Endothelial cell of umbilical vein (primary cell): ENCODE measurements at regions of chr14 and their contacts with region 1.

Region 1: GRCh38 chr14:22536853-22537338 is 52.1 kb downstream of the DAD1 start:
- DNase-seq: peak; percentile 98
- H3K4me3 ChIP-seq: no peak overlapping the region
- H3K27ac ChIP-seq: peak overlapping the region; percentile 57
- H3K4me1 ChIP-seq: peaks cover 38% of the 10 kb centered on the region
- H3K27me3 ChIP-seq: no peaks in the 10 kb centered on the region
- CTCF ChIP-seq: no peak
- POLR2A ChIP-seq: no peak

Region 2: DNA sequence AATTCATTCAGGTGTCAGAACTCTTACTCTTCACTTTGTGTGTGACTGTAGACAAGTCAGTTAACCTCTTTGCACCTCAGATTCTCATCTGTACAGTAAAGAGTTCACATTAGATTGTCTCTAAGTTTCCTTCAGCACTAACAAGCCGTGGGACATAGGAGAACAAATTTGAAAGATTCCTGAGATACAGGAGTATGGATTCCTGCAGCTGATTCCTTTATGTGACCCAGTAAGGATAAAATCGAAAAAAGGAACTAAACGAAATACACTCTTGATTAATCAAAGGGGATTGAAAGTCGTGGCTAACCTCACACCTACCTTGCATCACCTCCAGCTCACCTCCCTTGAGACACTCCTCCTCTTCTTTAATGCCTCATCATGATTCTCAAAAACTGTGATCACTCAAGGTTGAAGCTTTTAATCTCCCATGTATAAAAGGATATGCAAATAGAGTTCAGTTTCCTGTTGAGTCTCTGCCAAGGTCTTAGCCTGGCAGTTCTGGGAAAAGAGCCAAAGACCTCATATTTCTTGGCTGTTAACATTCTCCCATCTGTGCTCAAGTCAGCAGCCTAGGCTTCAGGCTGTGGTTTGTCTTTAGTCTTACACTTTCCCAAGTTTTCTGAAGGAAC is 104.4 kb before region 1 on chr14:
- CTCF ChIA-PET with region 1: no interaction called
- POLR2A ChIA-PET with region 1: no interaction called
- dilution Hi-C with region 1: no loop called
- intact Hi-C with region 1: loop called (anchors 5 kb)
- DNase-seq: peak; percentile 97
- H3K4me3 ChIP-seq: no peak overlapping the region
- H3K27ac ChIP-seq: no peak overlapping the region
- H3K4me1 ChIP-seq: peaks cover 29% of the 10 kb centered on the region
- H3K27me3 ChIP-seq: peaks cover 4 to 6% of the 10 kb centered on the region in 2 experiments
- CTCF ChIP-seq: no peak
- POLR2A ChIP-seq: no peak

Region 3: GRCh38 chr14:22570132-22570949 is 33.4 kb after region 1 on chr14:
- CTCF ChIA-PET with region 1: no interaction called
- POLR2A ChIA-PET with region 1: no interaction called
- dilution Hi-C with region 1: no loop called
- intact Hi-C with region 1: no loop called
- DNase-seq: peak; percentile 83
- H3K4me3 ChIP-seq: no peak overlapping the region
- H3K27ac ChIP-seq: no peak overlapping the region
- H3K4me1 ChIP-seq: peaks cover 40% of the 10 kb centered on the region
- H3K27me3 ChIP-seq: no peaks in the 10 kb centered on the region
- CTCF ChIP-seq: peak; percentile 55 to 63
- POLR2A ChIP-seq: no peak

Region 4: GRCh38 chr14:22668417-22668816 is 131.5 kb after region 1 on chr14:
- CTCF ChIA-PET with region 1: no interaction called
- POLR2A ChIA-PET with region 1: no interaction called
- dilution Hi-C with region 1: no loop called
- intact Hi-C with region 1: no loop called
- DNase-seq: no peak
- H3K4me3 ChIP-seq: no peak overlapping the region
- H3K27ac ChIP-seq: no peak overlapping the region
- H3K4me1 ChIP-seq: peaks cover 4% of the 10 kb centered on the region
- H3K27me3 ChIP-seq: no peaks in the 10 kb centered on the region
- CTCF ChIP-seq: no peak
- POLR2A ChIP-seq: no peak

Region 5: DNA sequence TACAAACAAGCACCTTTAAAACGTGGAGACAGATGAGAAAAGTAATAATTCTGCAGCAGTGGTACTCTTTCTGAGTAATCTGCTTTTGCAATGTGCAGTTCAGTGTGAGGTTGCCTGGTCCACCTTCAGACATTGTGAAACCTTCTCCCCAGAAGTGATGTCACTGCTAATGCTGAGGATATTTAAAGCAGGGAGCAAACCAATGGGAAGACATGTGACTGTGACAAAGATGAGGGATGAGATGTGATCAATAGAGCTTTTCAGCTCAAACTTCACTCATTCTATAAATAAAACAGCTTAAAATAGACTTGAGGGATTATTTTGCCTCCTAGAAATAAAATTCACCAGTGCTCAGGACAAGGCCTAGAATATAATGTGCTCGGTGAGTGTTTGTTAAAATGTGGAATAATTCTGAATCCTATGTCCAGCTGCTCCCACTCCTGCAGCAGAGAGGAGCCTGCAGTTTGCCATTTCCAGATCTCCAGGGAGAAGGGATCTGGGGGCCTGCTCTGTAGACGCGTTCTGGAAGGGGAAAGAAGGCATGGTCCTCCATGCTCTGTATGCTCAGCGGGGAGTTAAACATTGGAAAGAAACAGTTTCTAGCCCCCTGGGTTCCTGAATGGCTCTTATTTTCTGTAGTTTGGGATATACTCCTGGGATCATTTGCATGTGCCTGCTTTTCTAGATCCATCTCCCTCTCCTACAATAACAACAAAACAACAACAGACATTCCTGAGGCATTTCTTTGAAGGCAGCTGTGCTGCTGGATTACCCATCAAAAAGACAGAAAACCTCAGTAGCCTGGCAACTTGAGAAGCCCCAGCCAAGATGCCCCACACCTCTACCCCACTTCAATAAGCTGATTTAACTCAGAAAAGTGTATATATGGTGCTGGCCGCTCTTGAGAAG is 637.6 kb after region 1 on chr14:
- CTCF ChIA-PET with region 1: no interaction called
- POLR2A ChIA-PET with region 1: no interaction called
- dilution Hi-C with region 1: no loop called
- intact Hi-C with region 1: no loop called
- DNase-seq: no peak
- H3K4me3 ChIP-seq: no peak overlapping the region
- H3K27ac ChIP-seq: no peak overlapping the region
- H3K4me1 ChIP-seq: peaks cover 6% of the 10 kb centered on the region
- H3K27me3 ChIP-seq: peaks cover 6 to 17% of the 10 kb centered on the region in 2 experiments
- CTCF ChIP-seq: no peak
- POLR2A ChIP-seq: no peak